ENCODE measurements at regions of chr6 and their contacts with region 1.

Region 1: DNA sequence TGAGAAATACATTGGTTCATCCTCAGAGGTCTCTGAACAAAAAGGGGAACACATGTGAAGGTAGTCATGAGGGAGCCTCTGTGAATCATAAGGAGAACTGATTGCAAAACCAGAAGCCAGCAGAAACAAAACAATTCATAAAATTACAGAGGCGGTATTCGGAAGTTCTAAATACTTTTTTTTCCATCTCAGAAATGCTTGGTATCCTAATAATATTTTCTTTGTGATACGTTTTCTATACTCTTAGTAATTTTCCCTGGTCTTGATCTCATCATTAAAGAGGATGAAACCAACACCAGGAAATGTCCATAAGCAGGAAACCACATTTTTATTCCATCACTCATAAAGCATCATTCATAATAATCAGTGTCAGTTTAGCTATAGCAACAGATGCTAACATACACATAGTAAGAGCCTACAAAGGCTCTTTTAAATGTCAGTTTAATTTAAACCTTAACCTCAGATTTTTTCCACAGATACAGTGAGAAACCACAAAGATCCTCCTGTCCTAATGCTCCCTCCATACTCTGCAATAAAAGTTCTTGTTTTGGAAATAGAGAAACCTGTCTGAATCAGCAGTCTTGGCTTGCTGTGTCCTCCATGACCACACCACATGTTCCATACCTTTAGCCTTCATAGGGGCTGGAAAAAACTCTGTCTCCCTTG is 29.2 kb downstream of the SGK1 start:
- DNase-seq: peak; percentile 15
- ATAC-seq: peak; percentile 86
- H3K4me3 Mint-ChIP-seq: no peak overlapping the region
- H3K27ac Mint-ChIP-seq: peak overlapping the region; percentile 90
- H3K4me1 Mint-ChIP-seq: peaks cover 20% of the 10 kb centered on the region
- H3K27me3 Mint-ChIP-seq: no peaks in the 10 kb centered on the region

Region 2: DNA sequence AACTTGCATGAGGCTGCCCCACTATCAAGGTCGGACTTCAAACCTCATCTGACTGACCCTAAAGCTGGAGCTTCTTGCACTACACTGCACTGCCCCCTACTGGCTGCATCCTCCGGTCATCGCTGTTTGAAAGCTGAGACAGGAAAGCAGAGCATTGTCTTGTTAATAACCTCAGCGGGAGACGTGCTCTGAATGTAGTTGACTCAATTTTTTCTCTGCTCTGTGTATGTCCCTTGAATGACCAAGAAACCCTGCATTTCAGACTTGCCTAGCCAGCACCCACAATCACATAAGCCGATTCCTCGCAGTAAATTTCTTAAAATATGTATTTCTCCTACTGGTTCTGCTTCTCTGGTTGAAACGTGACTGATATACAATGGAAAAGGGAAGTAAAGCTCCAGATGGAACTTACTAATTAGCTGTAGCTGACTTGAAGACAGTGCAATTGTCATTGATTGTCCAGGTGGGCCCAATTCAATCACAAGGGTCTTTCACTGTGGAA is 372.0 kb before region 1 on chr6:
- CTCF ChIA-PET with region 1: no interaction called
- POLR2A ChIA-PET with region 1: no interaction called
- intact Hi-C with region 1: no loop called
- DNase-seq: peak; percentile 91
- ATAC-seq: peak; percentile 60
- H3K4me3 Mint-ChIP-seq: no peak overlapping the region
- H3K27ac Mint-ChIP-seq: no peak overlapping the region
- H3K4me1 Mint-ChIP-seq: peaks cover 3% of the 10 kb centered on the region
- H3K27me3 Mint-ChIP-seq: peaks cover 19% of the 10 kb centered on the region

Region 3: DNA sequence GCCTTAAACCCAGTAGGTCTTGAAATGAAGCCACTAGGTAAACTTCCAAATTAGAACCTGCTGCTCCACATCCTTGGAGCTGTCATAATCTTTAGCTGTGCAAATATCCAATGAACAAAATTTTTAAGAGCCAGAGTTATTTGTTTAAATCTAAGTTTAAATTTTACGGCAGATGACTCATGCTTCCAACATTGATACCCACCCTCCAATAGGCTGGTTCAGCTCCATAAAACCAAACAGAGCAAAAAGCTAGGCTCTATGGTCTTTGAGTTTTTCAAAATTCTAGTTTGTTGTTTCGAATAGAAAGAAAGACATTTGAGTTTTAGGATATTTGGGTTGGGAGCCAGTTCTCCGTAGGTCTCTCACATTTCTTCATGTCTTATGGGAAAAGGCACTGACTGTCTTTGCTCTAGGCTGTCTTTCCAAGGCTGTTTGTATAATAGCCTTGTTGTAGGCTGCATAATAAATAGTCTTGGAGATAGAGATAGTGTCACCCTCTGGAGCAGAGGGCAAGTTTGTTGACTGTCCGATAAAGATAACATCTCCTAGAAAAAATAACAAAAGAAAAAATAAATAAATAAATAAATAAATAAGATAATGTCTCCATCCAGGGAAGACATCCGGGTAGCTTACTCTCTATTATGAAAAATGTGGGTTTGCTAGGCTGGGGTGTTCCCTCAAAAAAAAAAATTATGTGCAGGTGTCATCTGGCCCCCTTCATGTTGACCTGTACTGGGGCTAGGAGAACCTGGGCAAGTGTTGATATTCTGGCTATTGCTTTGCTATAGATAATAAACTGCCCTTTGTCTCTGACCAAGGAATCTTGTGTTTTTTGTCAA is 272.7 kb before region 1 on chr6:
- CTCF ChIA-PET with region 1: no interaction called
- POLR2A ChIA-PET with region 1: no interaction called
- intact Hi-C with region 1: no loop called
- DNase-seq: no peak
- ATAC-seq: no peak
- H3K4me3 Mint-ChIP-seq: no peak overlapping the region
- H3K27ac Mint-ChIP-seq: no peak overlapping the region
- H3K4me1 Mint-ChIP-seq: peaks cover under 1% of the 10 kb centered on the region
- H3K27me3 Mint-ChIP-seq: peaks cover 6% of the 10 kb centered on the region

Region 4: GRCh38 chr6:134235937-134236751 is 52.5 kb before region 1 on chr6:
- CTCF ChIA-PET with region 1: no interaction called
- POLR2A ChIA-PET with region 1: no interaction called
- intact Hi-C with region 1: loop called (anchors 1 kb)
- DNase-seq: peak; percentile 25
- ATAC-seq: peak; percentile 83
- H3K4me3 Mint-ChIP-seq: peak overlapping the region; percentile 35
- H3K27ac Mint-ChIP-seq: peak overlapping the region; percentile 77
- H3K4me1 Mint-ChIP-seq: peaks cover 41% of the 10 kb centered on the region
- H3K27me3 Mint-ChIP-seq: no peaks in the 10 kb centered on the region

Region 5: DNA sequence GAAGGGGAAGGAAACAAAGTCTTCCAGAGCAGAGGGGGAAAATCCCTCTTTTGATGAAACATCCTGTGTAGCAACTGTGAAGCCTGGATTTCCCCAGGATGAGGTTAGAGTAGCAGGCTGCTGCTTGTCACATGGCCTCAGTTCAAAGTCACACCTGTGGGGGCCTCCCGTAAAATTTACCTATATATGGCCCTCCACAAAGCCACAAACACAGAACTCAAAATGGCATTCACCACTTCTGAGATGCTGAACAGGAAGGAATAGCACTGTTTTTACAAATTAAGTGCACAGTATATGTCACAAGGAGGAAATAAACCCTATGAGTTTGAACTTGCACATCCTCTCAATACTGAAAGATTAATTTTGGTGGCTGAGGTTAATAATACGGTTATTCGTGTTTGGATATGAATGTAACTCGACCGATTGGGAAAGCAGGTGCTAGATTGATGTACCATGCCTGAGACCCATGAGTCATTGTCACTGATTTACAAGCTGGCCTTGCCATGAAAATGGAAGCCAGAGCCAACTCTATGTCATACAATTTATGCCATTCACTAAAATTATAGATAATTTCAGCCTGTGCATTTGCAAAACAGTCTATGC is 41.3 kb before region 1 on chr6:
- CTCF ChIA-PET with region 1: no interaction called
- POLR2A ChIA-PET with region 1: no interaction called
- intact Hi-C with region 1: loop called (anchors 1 kb)
- DNase-seq: peak; percentile 84
- ATAC-seq: peak; percentile 91
- H3K4me3 Mint-ChIP-seq: peak overlapping the region; percentile 16
- H3K27ac Mint-ChIP-seq: peak overlapping the region; percentile 94
- H3K4me1 Mint-ChIP-seq: peaks cover 56% of the 10 kb centered on the region
- H3K27me3 Mint-ChIP-seq: no peaks in the 10 kb centered on the region

Region 6: GRCh38 chr6:134352786-134353480 is 64.3 kb after region 1 on chr6:
- CTCF ChIA-PET with region 1: no interaction called
- POLR2A ChIA-PET with region 1: no interaction called
- intact Hi-C with region 1: loop called (anchors 5 kb)
- DNase-seq: peak; percentile 53
- ATAC-seq: peak; percentile 80
- H3K4me3 Mint-ChIP-seq: no peak overlapping the region
- H3K27ac Mint-ChIP-seq: no peak overlapping the region
- H3K4me1 Mint-ChIP-seq: peaks cover 27% of the 10 kb centered on the region
- H3K27me3 Mint-ChIP-seq: no peaks in the 10 kb centered on the region

Region 7: DNA sequence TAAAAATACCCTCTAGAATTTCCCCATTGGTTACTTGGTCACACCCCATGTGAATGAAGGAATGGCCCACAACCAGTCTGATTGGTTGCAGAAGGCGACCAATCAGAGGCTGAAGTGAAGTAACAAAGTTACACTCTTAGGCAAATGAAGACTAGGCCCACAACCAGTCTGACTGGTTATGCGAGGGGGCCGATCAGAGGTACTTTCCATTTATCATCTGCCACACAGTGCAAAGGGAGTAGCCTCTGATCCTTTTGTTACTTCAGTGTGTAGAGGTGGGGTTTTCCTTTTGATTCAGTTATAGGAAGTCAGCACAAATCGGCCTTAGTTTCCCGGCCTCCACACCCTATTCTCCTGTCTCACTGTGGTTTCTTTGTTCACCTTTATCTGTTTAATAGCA is 90.4 kb after region 1 on chr6:
- CTCF ChIA-PET with region 1: no interaction called
- POLR2A ChIA-PET with region 1: no interaction called
- intact Hi-C with region 1: loop called in 1 of 2 experiments (anchors 2 kb)
- DNase-seq: peak; percentile 73
- ATAC-seq: peak; percentile 96
- H3K4me3 Mint-ChIP-seq: no peak overlapping the region
- H3K27ac Mint-ChIP-seq: peak overlapping the region; percentile 40
- H3K4me1 Mint-ChIP-seq: peaks cover 27% of the 10 kb centered on the region
- H3K27me3 Mint-ChIP-seq: no peaks in the 10 kb centered on the region

Region 8: GRCh38 chr6:134436281-134436815 is 147.7 kb after region 1 on chr6:
- CTCF ChIA-PET with region 1: no interaction called
- POLR2A ChIA-PET with region 1: no interaction called
- intact Hi-C with region 1: loop called (anchors 1 kb)
- DNase-seq: peak; percentile 84
- ATAC-seq: peak; percentile 90
- H3K4me3 Mint-ChIP-seq: no peak overlapping the region
- H3K27ac Mint-ChIP-seq: peak overlapping the region; percentile 80
- H3K4me1 Mint-ChIP-seq: peaks cover 36% of the 10 kb centered on the region
- H3K27me3 Mint-ChIP-seq: no peaks in the 10 kb centered on the region